HEK293 (cell line): ENCODE measurements at regions of chr6 and their contacts with region 1.

Region 1: DNA sequence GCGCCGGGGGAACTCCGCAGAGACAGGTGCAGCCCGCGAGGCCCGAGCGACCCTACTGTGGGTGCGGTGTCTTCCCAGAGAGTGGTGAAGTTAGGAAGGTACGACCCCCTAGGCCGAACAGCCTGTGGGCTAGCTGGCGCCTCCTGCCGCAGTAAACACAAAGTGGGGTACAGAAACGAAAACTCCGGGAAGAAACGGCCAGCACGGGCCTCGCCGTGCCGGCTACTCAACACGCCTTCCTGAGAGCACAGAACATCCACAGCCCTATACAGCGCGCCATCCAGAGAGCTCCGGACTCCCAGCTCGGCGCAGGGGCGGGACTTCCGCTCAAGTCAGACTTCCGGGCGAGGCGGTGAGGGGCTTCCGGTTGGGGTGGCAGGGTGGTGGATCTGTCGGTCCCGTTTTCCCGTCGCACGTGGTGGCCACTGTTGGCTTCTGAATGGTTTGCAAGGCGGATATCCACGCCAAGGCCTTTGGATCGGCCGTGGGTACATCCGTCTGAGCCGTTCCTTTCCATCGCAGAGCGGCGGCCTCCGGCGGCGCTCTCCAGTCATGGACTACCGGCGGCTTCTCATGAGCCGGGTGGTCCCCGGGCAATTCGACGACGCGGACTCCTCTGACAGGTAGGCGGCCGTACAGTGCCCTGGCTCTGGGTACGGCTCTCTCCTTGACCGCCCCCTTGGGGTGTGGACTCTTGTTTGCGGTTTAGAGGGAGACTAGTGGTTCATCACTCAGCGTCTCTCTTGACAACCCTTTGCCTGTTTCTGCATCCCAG is at the starts of genes CAGE1 and RIOK1:
- H3K4me3 ChIP-seq: peak within 1 kb of the TSS; percentile 70
- H3K27ac ChIP-seq: peak within 1 kb of the TSS; percentile 93
- H3K4me1 ChIP-seq: peaks cover 7% of the 10 kb centered on the region
- CTCF ChIP-seq: peak; percentile 85

Region 2: GRCh38 chr6:7312616-7313504 is 76.8 kb before region 1 on chr6 and contains the start of gene SSR1:
- CTCF ChIA-PET with region 1: interaction called, 4 read pairs
- POLR2A ChIA-PET with region 1: interaction called, 21 read pairs
- H3K4me3 ChIP-seq: peak within 1 kb of the TSS; percentile 78
- H3K27ac ChIP-seq: peak within 1 kb of the TSS; percentile 91
- H3K4me1 ChIP-seq: peaks cover 5% of the 10 kb centered on the region; the same call in 1 of the 2 replicates
- CTCF ChIP-seq: 0 out of 2 replicates have a peak, but pooled peaks have one; percentile 18